Body of pancreas (tissue), 4 donors: ENCODE measurements at regions of chr1 and their contacts with region 1.

Region 1: DNA sequence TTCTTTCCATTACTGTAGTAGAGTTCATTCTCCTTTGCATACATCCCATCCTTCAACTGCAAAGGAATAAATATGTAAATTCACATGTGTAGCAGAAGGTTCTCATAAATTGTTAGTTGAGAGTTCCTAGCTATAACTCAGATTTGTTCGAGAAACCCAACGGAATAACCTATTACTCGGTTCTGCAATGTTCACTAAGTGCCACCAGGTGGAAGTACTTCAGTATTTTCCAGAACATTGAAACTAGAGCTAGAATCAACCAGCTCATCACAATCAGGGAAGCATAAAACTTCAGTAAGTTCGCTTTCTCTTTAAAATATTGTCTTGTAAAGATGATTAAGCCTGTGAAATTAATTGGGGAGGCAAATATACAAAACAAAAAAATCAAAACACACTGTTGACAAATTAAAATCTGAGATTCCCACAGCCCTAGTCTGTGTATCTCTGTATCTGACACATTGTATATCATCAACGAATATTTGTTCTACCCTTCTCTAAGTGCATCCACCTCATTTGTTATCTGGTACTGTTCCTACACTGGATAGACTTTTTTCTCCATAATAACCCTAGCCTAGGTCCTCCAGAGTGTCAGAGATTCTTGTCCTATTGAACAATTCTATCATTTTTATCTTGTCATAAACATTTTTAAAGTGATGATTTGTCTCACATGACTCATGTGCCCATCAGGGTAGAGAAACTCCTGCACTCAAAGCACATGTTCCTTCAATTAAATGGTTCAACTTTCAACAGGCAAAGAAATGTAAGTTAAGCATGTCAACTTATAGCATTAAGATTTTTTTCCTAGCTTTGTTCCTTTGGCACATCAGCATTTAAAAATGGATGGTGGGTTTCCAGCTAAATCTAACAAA is 31.9 kb downstream of the MROH9 start:
- DNase-seq: peak; percentile 9 to 27 (median 14)
- ATAC-seq: peak; percentile 75
- H3K4me3 ChIP-seq: no peak overlapping the region
- H3K27ac ChIP-seq: no peak overlapping the region
- H3K4me1 ChIP-seq: no peaks in the 10 kb centered on the region
- H3K27me3 ChIP-seq: no peaks in the 10 kb centered on the region
- CTCF ChIP-seq: peak; percentile 27 to 71 (median 61)
- POLR2A ChIP-seq: no peak

Region 2: DNA sequence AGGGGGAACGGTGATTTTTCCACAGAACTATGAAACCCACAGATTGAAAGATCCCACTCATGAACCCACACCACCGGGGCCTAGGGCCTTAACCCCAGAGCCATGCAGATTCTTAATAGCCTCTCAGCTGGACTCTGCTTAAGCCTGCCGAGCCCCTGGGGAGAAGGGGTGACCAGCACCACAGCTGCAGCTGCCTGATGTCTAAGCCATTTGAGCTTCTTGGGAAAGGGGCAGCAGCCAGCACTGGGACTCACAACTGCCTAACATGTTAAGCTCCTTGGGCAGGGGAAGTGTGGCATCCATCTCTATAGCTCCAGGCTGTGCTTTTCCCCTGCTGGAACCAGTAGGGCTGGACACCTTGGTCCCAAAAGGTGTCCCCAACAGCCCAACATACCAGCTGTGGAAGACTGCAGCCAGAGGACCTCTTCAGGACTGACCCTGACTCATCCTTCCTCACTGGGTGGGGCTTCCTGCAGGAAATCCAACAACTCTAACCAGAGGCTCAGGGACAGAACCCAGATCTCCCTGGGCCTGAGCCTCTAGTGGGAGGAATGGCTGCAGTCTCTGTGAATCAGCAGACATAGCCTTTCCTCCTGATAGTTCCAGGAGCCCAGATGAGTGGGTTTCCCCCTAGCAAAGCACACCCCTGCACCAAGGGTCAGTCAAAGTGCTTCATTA is 88.8 kb after region 1 on chr1:
- intact Hi-C with region 1: no loop called
- DNase-seq: no peak
- ATAC-seq: no peak
- H3K4me3 ChIP-seq: no peak overlapping the region
- H3K27ac ChIP-seq: no peak overlapping the region
- H3K4me1 ChIP-seq: no peaks in the 10 kb centered on the region
- H3K27me3 ChIP-seq: no peaks in the 10 kb centered on the region
- CTCF ChIP-seq: no peak
- POLR2A ChIP-seq: no peak

Region 3: DNA sequence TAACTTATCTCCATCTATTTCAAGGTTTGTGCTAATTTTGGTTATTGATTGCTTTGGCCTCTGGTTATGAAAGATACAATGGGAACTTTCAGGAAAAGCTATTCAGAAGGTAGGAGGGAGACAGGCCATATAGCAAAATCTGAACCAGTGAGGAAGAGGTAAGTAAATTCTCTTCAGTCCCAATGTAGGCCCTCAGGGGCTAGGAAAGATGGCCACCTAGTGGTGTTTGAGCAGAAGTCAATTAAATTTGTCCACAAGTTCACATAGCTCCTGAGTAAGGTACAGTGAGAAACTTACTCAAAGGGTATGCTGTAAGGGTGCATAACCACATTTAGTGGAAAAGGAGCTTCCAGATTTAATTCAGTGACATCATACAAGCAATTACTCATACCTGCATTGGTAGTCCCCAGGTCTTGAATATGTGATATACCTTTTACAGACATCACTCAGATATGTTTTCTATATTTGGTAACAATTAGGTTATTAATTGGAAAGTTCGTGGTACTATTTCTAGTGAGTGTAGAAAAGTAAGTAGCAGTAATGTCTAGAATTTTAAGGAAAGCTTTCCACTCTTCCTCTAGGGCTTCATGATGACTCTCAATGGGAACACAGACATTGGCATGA is 259.6 kb after region 1 on chr1:
- intact Hi-C with region 1: loop called (anchors 10 kb)
- DNase-seq: peak; percentile 45 to 64 (median 53)
- ATAC-seq: peak; percentile 82
- H3K4me3 ChIP-seq: no peak overlapping the region
- H3K27ac ChIP-seq: no peak overlapping the region
- H3K4me1 ChIP-seq: peaks cover 4% of the 10 kb centered on the region
- H3K27me3 ChIP-seq: no peaks in the 10 kb centered on the region
- CTCF ChIP-seq: peak; percentile 30 to 95 (median 83)
- POLR2A ChIP-seq: no peak